ENCODE measurements at regions of chr19 and their contacts with region 1.

Region 1: GRCh38 chr19:31349160-31349881 is at the start of gene TSHZ3:
- DNase-seq: peak; percentile 84
- H3K4me3 ChIP-seq: peak within 1 kb of the TSS; percentile 73 to 79 (median 75)
- H3K27ac ChIP-seq: peak within 1 kb of the TSS; percentile 57
- H3K4me1 ChIP-seq: peaks cover 20% of the 10 kb centered on the region
- H3K27me3 ChIP-seq: no peaks in the 10 kb centered on the region
- CTCF ChIP-seq: no peak
- total RNA-seq, gene TSHZ3: 10.3 to 11.3 TPM

Region 2: GRCh38 chr19:31127134-31127967 is 222.0 kb before region 1 on chr19:
- CTCF ChIA-PET with region 1: no interaction called
- dilution Hi-C with region 1: no loop called
- in situ Hi-C with region 1: loop called in 1 of 2 experiments (anchors 25 kb)
- intact Hi-C with region 1: no loop called
- DNase-seq: peak; percentile 23
- H3K4me3 ChIP-seq: no peak overlapping the region
- H3K27ac ChIP-seq: no peak overlapping the region
- H3K4me1 ChIP-seq: no peaks in the 10 kb centered on the region
- H3K27me3 ChIP-seq: no peaks in the 10 kb centered on the region
- CTCF ChIP-seq: no peak

Region 3: GRCh38 chr19:31254180-31254551 is 95.2 kb before region 1 on chr19:
- CTCF ChIA-PET with region 1: no interaction called
- dilution Hi-C with region 1: no loop called
- in situ Hi-C with region 1: no loop called
- intact Hi-C with region 1: loop called (anchors 10 kb)
- DNase-seq: peak; percentile 86
- H3K4me3 ChIP-seq: no peak overlapping the region
- H3K27ac ChIP-seq: no peak overlapping the region
- H3K4me1 ChIP-seq: peaks cover 17% of the 10 kb centered on the region
- H3K27me3 ChIP-seq: no peaks in the 10 kb centered on the region
- CTCF ChIP-seq: no peak

Region 4: GRCh38 chr19:31314849-31315629 is 34.3 kb before region 1 on chr19:
- CTCF ChIA-PET with region 1: no interaction called
- dilution Hi-C with region 1: no loop called
- in situ Hi-C with region 1: no loop called
- intact Hi-C with region 1: loop called (anchors 2 kb)
- DNase-seq: no peak
- H3K4me3 ChIP-seq: no peak overlapping the region
- H3K27ac ChIP-seq: no peak overlapping the region
- H3K4me1 ChIP-seq: no peaks in the 10 kb centered on the region
- H3K27me3 ChIP-seq: no peaks in the 10 kb centered on the region
- CTCF ChIP-seq: peak in 1 of 2 donors; percentile 31

Region 5: DNA sequence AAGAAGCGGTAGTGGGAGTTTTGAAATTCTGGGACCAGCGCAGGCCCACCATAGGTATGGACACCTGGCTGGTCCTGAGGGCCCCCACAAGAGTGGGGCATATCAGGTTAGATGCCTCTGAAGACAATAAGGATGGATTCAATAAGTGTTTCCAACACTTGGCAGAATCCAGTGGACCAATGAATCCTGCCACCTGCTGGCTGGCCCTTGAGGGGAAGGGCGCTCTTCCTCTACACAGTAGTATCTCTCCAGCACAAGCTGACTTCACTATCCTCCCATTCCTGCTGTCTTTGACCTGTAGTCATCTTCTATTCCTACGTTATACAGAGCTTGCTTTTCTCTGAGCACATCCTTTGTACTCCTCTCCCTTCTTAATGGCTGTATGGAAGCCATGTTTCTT is 199.6 kb after region 1 on chr19:
- CTCF ChIA-PET with region 1: no interaction called
- dilution Hi-C with region 1: no loop called
- in situ Hi-C with region 1: no loop called
- intact Hi-C with region 1: loop called (anchors 5 kb)
- DNase-seq: peak; percentile 6
- H3K4me3 ChIP-seq: no peak overlapping the region
- H3K27ac ChIP-seq: no peak overlapping the region
- H3K4me1 ChIP-seq: no peaks in the 10 kb centered on the region
- H3K27me3 ChIP-seq: no peaks in the 10 kb centered on the region
- CTCF ChIP-seq: peak; percentile 12 to 73

Measured in mammary epithelial cell (primary cell).